Panc1 (cell line): ENCODE measurements at regions of chr21 and their contacts with region 1.

Region 1: GRCh38 chr21:32770871-32771523 is 558 bp downstream of the PAXBP1 start:
- DNase-seq: no peak
- ATAC-seq: peak; percentile 66
- H3K4me3 ChIP-seq: peak overlapping the region; percentile 89 to 96
- H3K27ac ChIP-seq: peak overlapping the region; percentile 87
- H3K4me1 ChIP-seq: peaks cover 6% of the 10 kb centered on the region
- H3K27me3 ChIP-seq: no peaks in the 10 kb centered on the region
- CTCF ChIP-seq: no peak

Region 2: GRCh38 chr21:32666258-32666657 is 104.7 kb before region 1 on chr21:
- CTCF ChIA-PET with region 1: no interaction called
- POLR2A ChIA-PET with region 1: interaction called, 12 read pairs
- in situ Hi-C with region 1: no loop called
- intact Hi-C with region 1: no loop called
- DNase-seq: no peak
- ATAC-seq: no peak
- H3K4me3 ChIP-seq: no peak overlapping the region
- H3K27ac ChIP-seq: no peak overlapping the region
- H3K4me1 ChIP-seq: no peaks in the 10 kb centered on the region
- H3K27me3 ChIP-seq: no peaks in the 10 kb centered on the region
- CTCF ChIP-seq: no peak